ENCODE measurements at regions of chr12 and their contacts with region 1.

Region 1: GRCh38 chr12:123141615-123142517 is 9.0 kb downstream of the PITPNM2 start:
- DNase-seq: peak; percentile 65 to 73
- H3K4me3 ChIP-seq: no peak overlapping the region
- H3K27ac ChIP-seq: peak overlapping the region; percentile 73 to 74
- H3K4me1 ChIP-seq: peaks cover 0 to 48% (median 37%) of the 10 kb centered on the region in 4 donors
- H3K27me3 ChIP-seq: no peaks in the 10 kb centered on the region
- CTCF ChIP-seq: no peak

Region 2: GRCh38 chr12:122980183-122981046 is 161.5 kb before region 1 on chr12 and contains the start of gene ARL6IP4:
- intact Hi-C with region 1: loop called (anchors 10 kb)
- DNase-seq: peak in 1 of 2 donors; percentile 73
- H3K4me3 ChIP-seq: peak within 1 kb of the TSS; percentile 78 to 100
- H3K27ac ChIP-seq: peak within 1 kb of the TSS; percentile 96 to 98
- H3K4me1 ChIP-seq: peaks cover 11 to 95% (median 85%) of the 10 kb centered on the region in 4 donors
- H3K27me3 ChIP-seq: no peaks in the 10 kb centered on the region
- CTCF ChIP-seq: no peak